ENCODE measurements at regions of chr21 and their contacts with region 1.

Region 1: GRCh38 chr21:36806103-36806502 is 107.2 kb downstream of the SIM2 start:
- DNase-seq: no peak
- H3K4me3 ChIP-seq: no peak overlapping the region
- H3K4me3 Mint-ChIP-seq: no peak overlapping the region
- H3K27ac Mint-ChIP-seq: peak overlapping the region; percentile 0
- H3K4me1 ChIP-seq: no peaks in the 10 kb centered on the region
- H3K4me1 Mint-ChIP-seq: no peaks in the 10 kb centered on the region
- H3K27me3 ChIP-seq: no peaks in the 10 kb centered on the region
- H3K27me3 Mint-ChIP-seq: no peaks in the 10 kb centered on the region
- CTCF ChIP-seq: no peak

Region 2: GRCh38 chr21:36945496-36946138 is 139.5 kb after region 1 on chr21:
- CTCF ChIA-PET with region 1: interaction called, 13 read pairs
- POLR2A ChIA-PET with region 1: no interaction called
- intact Hi-C with region 1: no loop called
- DNase-seq: no peak
- H3K4me3 ChIP-seq: no peak overlapping the region
- H3K4me3 Mint-ChIP-seq: no peak overlapping the region
- H3K27ac Mint-ChIP-seq: no peak overlapping the region
- H3K4me1 ChIP-seq: no peaks in the 10 kb centered on the region
- H3K4me1 Mint-ChIP-seq: no peaks in the 10 kb centered on the region
- H3K27me3 ChIP-seq: no peaks in the 10 kb centered on the region
- H3K27me3 Mint-ChIP-seq: no peaks in the 10 kb centered on the region
- CTCF ChIP-seq: no peak